CD4-positive, alpha-beta memory T cell (primary cell): ENCODE measurements at regions of chr1 and their contacts with region 1.

Region 1: DNA sequence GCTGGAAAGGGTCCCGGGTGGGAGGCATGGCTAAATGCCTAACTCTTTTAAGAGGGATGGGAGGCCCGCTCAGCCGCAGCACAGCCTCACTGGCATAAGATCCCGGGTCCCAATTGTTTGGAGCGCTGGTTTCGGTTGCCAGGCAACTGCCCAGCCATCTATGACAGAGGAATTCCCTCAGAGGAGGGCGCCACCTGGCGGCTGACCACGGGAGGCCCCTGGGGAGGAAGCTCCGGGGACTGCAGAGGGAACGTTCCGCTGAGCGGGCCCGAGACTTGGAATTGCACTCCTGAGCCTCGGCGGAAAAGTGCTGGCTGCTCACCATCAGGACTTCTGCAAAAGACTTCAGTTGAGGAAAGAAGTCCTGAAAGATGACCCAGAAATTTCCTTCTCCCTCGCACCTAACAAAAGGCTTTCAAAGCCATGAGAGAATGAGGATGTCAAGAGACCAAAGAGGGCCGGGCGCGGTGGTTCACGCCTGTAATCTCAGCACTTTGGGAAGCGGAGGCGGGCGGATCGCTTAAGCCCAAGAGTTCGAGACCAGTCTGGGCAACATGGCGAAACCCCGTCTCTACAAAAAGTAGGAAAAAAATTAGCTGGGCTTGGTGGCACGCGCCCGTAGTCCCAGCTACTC is 1.1 kb upstream of the ELAPOR1 start:
- DNase-seq: peak; percentile 86 to 89 (median 87)
- H3K4me3 ChIP-seq: peak overlapping the region in 1 of 2 donors; percentile 64
- H3K4me3 Mint-ChIP-seq: peak overlapping the region; percentile 86 to 94 (median 90)
- H3K27ac ChIP-seq: peak overlapping the region; percentile 61
- H3K27ac Mint-ChIP-seq: peak overlapping the region; percentile 94 to 99 (median 98)
- H3K4me1 ChIP-seq: peaks cover 24% of the 10 kb centered on the region
- H3K4me1 Mint-ChIP-seq: peaks cover 23 to 35% (median 28%) of the 10 kb centered on the region in 4 donors
- H3K27me3 ChIP-seq: no peaks in the 10 kb centered on the region
- H3K27me3 Mint-ChIP-seq: peaks cover 0 to 2% of the 10 kb centered on the region in 2 donors

Region 2: DNA sequence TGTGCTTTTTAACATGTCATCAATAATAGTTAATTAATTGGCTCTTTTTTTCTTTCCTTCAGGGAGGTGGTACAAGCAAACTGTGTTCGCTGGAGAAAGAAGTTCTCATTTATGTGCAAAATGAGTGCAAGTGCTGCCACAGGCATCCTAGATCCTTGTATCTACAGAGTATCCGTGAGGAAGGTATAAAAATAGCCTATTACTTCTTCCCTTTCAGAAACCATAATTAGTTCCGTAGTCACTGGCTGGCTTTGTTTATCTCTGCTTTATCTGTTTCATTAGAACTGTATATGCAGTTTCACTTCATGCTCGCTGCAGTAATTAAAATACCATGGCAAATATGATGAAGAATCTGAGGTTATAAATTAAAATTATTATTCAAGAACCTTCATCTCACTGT is 512.3 kb before region 1 on chr1:
- CTCF ChIA-PET with region 1: no interaction called
- POLR2A ChIA-PET with region 1: no interaction called
- intact Hi-C with region 1: no loop called
- DNase-seq: no peak
- H3K4me3 ChIP-seq: no peak overlapping the region
- H3K4me3 Mint-ChIP-seq: no peak overlapping the region
- H3K27ac ChIP-seq: no peak overlapping the region
- H3K27ac Mint-ChIP-seq: no peak overlapping the region
- H3K4me1 ChIP-seq: no peaks in the 10 kb centered on the region
- H3K4me1 Mint-ChIP-seq: peaks cover 0 to 5% (median 2%) of the 10 kb centered on the region in 4 donors
- H3K27me3 ChIP-seq: no peaks in the 10 kb centered on the region
- H3K27me3 Mint-ChIP-seq: no peaks in the 10 kb centered on the region

Region 3: GRCh38 chr1:108643492-108644335 is 469.1 kb before region 1 on chr1:
- CTCF ChIA-PET with region 1: no interaction called
- POLR2A ChIA-PET with region 1: interaction called, 8 read pairs
- intact Hi-C with region 1: loop called (anchors 5 kb)
- DNase-seq: peak; percentile 57 to 73 (median 69)
- H3K4me3 ChIP-seq: no peak overlapping the region
- H3K4me3 Mint-ChIP-seq: peak overlapping the region in 7 of 8 donors; percentile 4 to 52 (median 17)
- H3K27ac ChIP-seq: peak overlapping the region; percentile 57
- H3K27ac Mint-ChIP-seq: peak overlapping the region; percentile 91 to 99 (median 98)
- H3K4me1 ChIP-seq: peaks cover 64% of the 10 kb centered on the region
- H3K4me1 Mint-ChIP-seq: peaks cover 59 to 76% (median 68%) of the 10 kb centered on the region in 4 donors
- H3K27me3 ChIP-seq: no peaks in the 10 kb centered on the region
- H3K27me3 Mint-ChIP-seq: no peaks in the 10 kb centered on the region

Region 4: DNA sequence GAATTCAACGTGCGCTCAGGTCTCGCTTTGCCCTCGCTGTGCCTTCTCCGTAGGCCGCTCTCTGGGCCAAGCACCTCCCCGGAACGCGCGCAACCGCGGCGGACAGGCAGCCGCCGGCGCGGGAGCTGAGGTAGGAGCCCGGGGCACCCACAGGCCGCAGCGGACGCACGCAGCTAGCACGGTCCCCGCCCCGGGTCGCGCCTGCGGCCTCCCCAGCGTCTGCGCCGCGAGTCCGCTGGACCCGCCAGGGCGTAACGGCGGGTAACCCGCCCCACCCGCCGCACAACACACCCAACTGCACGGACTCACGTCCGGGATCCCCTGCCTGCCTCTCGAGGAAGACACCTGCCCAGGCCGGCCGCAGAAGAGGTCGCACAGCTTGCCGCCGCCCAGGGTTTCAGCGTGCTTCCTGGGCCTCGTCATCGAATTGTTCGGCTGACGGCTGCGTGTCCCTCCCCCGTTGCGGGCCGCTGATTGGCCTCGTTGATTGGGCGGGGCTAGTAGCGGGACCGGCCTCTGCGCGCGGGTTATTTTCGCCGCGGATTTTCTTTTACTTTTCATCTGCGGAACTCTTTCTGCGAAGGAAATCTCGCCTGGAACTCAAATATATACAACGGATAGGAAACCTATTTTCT is 149.6 kb before region 1 on chr1 and contains the start of gene CLCC1:
- CTCF ChIA-PET with region 1: interaction called, 6 read pairs
- POLR2A ChIA-PET with region 1: interaction called, 4 read pairs
- intact Hi-C with region 1: loop called (anchors 2 kb)
- DNase-seq: peak; percentile 92 to 96 (median 94)
- H3K4me3 ChIP-seq: peak within 1 kb of the TSS; percentile 68 to 79
- H3K4me3 Mint-ChIP-seq: peak within 1 kb of the TSS; percentile 88 to 95 (median 90)
- H3K27ac ChIP-seq: peak within 1 kb of the TSS; percentile 81
- H3K27ac Mint-ChIP-seq: peak within 1 kb of the TSS; percentile 91 to 97 (median 96)
- H3K4me1 ChIP-seq: peaks cover 25% of the 10 kb centered on the region
- H3K4me1 Mint-ChIP-seq: peaks cover 18 to 52% (median 31%) of the 10 kb centered on the region in 4 donors
- H3K27me3 ChIP-seq: no peaks in the 10 kb centered on the region
- H3K27me3 Mint-ChIP-seq: no peaks in the 10 kb centered on the region
- total RNA-seq, gene CLCC1: 29.7 to 31.6 TPM

Region 5: DNA sequence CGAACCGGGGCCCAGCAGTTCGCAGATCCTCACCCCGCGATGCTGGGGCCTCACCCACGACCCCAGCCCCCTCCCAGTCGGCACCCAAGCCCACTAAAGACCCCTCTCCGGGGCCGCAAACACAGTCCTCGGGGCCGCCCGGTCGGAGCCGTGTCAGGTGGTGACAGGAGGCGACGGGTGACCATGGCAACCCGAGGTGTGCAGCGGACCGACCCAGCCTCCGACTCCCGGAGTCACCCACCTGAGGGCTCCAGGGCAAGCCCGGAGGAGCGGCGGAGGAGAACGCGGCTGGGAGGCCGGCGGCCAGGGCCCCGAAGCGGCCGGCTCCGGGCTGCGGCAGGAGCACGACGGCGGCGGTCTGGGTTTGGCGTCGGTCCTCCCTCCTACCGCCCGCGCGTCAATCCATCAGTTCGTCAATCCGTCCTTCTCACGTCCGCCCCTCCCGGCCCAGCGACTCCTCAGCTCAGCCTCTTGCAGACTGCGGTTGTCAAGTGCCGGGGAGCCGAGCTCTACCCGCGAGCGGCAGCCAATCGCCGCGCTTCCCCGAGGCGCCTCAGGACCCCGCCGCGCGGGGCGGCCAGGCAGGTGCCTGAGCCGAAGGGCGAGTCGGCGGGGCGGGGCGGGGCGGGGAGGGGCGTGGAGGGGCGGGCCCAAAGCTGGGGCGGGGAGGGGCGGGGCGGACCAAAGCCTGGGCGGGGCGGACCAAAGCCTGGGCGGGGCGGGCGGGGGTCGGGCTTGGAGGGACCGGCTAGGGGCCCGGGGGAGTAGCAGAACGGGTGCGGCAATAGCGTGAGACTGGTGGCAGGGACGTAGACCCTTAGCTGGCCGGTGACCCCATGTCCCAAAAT is 70.9 kb before region 1 on chr1 and contains the start of gene WDR47:
- CTCF ChIA-PET with region 1: interaction called, 8 read pairs
- POLR2A ChIA-PET with region 1: interaction called, 7 read pairs
- intact Hi-C with region 1: loop called (anchors 1 kb)
- DNase-seq: peak; percentile 96 to 98 (median 97)
- H3K4me3 ChIP-seq: peak within 1 kb of the TSS; percentile 65 to 92
- H3K4me3 Mint-ChIP-seq: peak within 1 kb of the TSS; percentile 91 to 95 (median 93)
- H3K27ac ChIP-seq: peak within 1 kb of the TSS; percentile 84
- H3K27ac Mint-ChIP-seq: peak within 1 kb of the TSS; percentile 79 to 96 (median 93)
- H3K4me1 ChIP-seq: peaks cover 14% of the 10 kb centered on the region
- H3K4me1 Mint-ChIP-seq: peaks cover 8 to 19% (median 14%) of the 10 kb centered on the region in 4 donors
- H3K27me3 ChIP-seq: no peaks in the 10 kb centered on the region
- H3K27me3 Mint-ChIP-seq: no peaks in the 10 kb centered on the region
- total RNA-seq, gene WDR47: 14.0 to 14.1 TPM

Region 6: DNA sequence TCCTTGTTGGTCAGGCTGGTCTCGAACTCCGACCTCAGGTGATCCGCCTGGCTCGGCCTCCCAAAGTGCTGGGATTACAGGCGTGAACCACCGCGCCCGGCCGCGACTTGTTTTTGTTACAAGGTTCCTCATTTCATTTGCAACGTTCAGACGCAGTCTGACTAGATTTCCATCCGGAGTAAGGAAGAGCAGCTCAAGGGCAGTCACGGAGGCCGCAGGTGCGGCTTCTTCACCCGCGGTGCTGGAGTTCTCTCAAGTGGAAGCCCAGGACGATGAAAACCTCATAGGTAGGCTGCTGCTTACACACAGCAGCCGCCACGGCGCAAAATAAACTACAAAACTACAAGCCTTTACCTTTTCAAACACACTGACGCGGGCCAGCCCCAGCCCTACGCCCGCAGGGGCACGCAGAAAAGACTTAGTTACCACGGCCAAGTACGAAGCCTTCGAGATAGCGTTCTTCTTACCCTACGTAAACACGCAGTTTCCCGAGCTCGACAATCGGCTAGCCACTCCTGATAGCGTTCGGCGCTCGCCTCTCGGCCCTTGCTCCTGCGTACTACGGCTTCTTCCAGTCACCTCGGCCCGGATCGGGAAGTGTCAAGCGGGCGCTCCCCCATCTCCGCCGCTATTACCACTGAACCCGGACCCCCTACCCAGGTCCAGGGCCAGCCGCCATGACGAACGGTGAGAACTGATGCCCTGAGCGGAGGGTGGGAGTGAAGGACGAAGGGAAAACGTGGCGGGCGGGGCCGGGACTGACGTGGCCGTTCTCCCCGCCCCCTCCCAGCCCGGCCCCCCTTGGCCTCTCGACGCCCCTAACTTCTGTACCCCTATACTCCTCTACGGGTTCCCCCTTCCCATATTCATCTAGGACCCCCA is 22.3 kb before region 1 on chr1 and contains the start of gene TMEM167B:
- CTCF ChIA-PET with region 1: interaction called, 14 read pairs
- POLR2A ChIA-PET with region 1: interaction called, 32 read pairs
- intact Hi-C with region 1: no loop called
- DNase-seq: peak; percentile 88 to 93 (median 89)
- H3K4me3 ChIP-seq: peak within 1 kb of the TSS; percentile 67 to 72
- H3K4me3 Mint-ChIP-seq: peak within 1 kb of the TSS; percentile 93 to 97 (median 94)
- H3K27ac ChIP-seq: peak within 1 kb of the TSS; percentile 90
- H3K27ac Mint-ChIP-seq: peak within 1 kb of the TSS; percentile 89 to 99 (median 98)
- H3K4me1 ChIP-seq: peaks cover 32% of the 10 kb centered on the region
- H3K4me1 Mint-ChIP-seq: peaks cover 18 to 48% (median 36%) of the 10 kb centered on the region in 4 donors
- H3K27me3 ChIP-seq: no peaks in the 10 kb centered on the region
- H3K27me3 Mint-ChIP-seq: no peaks in the 10 kb centered on the region
- total RNA-seq, gene TMEM167B: 42.9 to 47.9 TPM

Region 7: GRCh38 chr1:109213785-109214468 is 101.2 kb after region 1 on chr1 and contains the start of gene SARS1:
- CTCF ChIA-PET with region 1: no interaction called
- POLR2A ChIA-PET with region 1: interaction called, 20 read pairs
- intact Hi-C with region 1: loop called (anchors 1 kb)
- DNase-seq: peak; percentile 81 to 93 (median 88)
- H3K4me3 ChIP-seq: peak within 1 kb of the TSS; percentile 71 to 94
- H3K4me3 Mint-ChIP-seq: peak within 1 kb of the TSS; percentile 95 to 100 (median 98)
- H3K27ac ChIP-seq: peak within 1 kb of the TSS; percentile 78
- H3K27ac Mint-ChIP-seq: peak within 1 kb of the TSS; percentile 93 to 99 (median 96)
- H3K4me1 ChIP-seq: peaks cover 37% of the 10 kb centered on the region
- H3K4me1 Mint-ChIP-seq: peaks cover 24 to 45% (median 38%) of the 10 kb centered on the region in 4 donors
- H3K27me3 ChIP-seq: no peaks in the 10 kb centered on the region
- H3K27me3 Mint-ChIP-seq: no peaks in the 10 kb centered on the region
- total RNA-seq, gene SARS1: 178 to 190 TPM

Region 8: GRCh38 chr1:109483672-109484518 is 371.1 kb after region 1 on chr1 and contains the start of gene ATXN7L2:
- CTCF ChIA-PET with region 1: interaction called, 3 read pairs
- POLR2A ChIA-PET with region 1: no interaction called
- intact Hi-C with region 1: loop called (anchors 1 kb)
- DNase-seq: peak; percentile 92 to 95 (median 93)
- H3K4me3 ChIP-seq: peak within 1 kb of the TSS; percentile 95 to 98
- H3K4me3 Mint-ChIP-seq: peak within 1 kb of the TSS; percentile 91 to 96 (median 94)
- H3K27ac ChIP-seq: peak within 1 kb of the TSS; percentile 76
- H3K27ac Mint-ChIP-seq: peak within 1 kb of the TSS; percentile 86 to 97 (median 92)
- H3K4me1 ChIP-seq: peaks cover 20% of the 10 kb centered on the region
- H3K4me1 Mint-ChIP-seq: peaks cover 17 to 42% (median 30%) of the 10 kb centered on the region in 4 donors
- H3K27me3 ChIP-seq: peaks cover 4% of the 10 kb centered on the region
- H3K27me3 Mint-ChIP-seq: peaks cover 0 to 5% of the 10 kb centered on the region in 2 donors
- total RNA-seq, gene ATXN7L2: 7.4 to 9.0 TPM